Activated T-helper 1 cell treated with anti-CD3 and anti-CD28 coated beads, Interleukin-12 subunit alpha, Interleukin-12 subunit beta, Interleukin-2, Interleukin-4 antibody, amounts not matched to agents 30 ng/mL and 10 ng/mL and 1 ng/mL, durations not matched to agents 14 hours and 24 hours and 36 hours (primary cell): ENCODE measurements at regions of chr15 and their contacts with region 1.

Region 1: GRCh38 chr15:49023354-49023753 is 22.9 kb downstream of the SECISBP2L start:
- DNase-seq: no peak
- H3K4me3 Mint-ChIP-seq: no peak overlapping the region
- H3K27ac Mint-ChIP-seq: peak overlapping the region; percentile 56
- H3K4me1 Mint-ChIP-seq: peaks cover 17% of the 10 kb centered on the region
- H3K27me3 Mint-ChIP-seq: no peaks in the 10 kb centered on the region

Region 2: GRCh38 chr15:49036650-49037545 is 13.5 kb after region 1 on chr15:
- intact Hi-C with region 1: loop called (anchors 2 kb)
- DNase-seq: no peak
- H3K4me3 Mint-ChIP-seq: no peak overlapping the region
- H3K27ac Mint-ChIP-seq: no peak overlapping the region
- H3K4me1 Mint-ChIP-seq: peaks cover 17% of the 10 kb centered on the region
- H3K27me3 Mint-ChIP-seq: no peaks in the 10 kb centered on the region